ENCODE measurements at regions of chr3 and their contacts with region 1.

Region 1: DNA sequence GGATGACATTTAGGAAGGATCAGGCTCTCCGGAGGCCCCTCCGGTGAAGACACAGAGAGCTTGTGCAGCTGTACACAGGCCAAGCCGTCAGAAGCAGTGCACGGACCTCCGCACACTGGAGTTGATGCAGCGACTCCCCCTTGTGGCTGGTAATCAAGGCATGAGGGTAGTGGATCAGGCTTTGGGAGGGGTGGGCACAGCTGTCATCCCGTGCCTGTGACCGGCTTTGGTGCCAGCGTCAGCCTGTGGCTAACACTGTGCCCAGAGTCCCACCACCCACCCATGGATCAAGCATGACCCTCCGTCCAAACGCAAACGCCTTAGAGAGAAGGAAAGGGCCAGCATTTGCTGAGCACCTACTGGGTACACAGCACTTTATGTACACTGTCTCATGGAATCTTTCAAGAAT is 8.2 kb upstream of the GRIP2 start:
- DNase-seq: peak; percentile 71 to 89 (median 81)
- ATAC-seq: peak; percentile 77 to 86
- H3K4me3 ChIP-seq: no peak overlapping the region
- H3K27ac ChIP-seq: no peak overlapping the region
- H3K4me1 ChIP-seq: no peaks in the 10 kb centered on the region
- H3K27me3 ChIP-seq: no peaks in the 10 kb centered on the region

Region 2: DNA sequence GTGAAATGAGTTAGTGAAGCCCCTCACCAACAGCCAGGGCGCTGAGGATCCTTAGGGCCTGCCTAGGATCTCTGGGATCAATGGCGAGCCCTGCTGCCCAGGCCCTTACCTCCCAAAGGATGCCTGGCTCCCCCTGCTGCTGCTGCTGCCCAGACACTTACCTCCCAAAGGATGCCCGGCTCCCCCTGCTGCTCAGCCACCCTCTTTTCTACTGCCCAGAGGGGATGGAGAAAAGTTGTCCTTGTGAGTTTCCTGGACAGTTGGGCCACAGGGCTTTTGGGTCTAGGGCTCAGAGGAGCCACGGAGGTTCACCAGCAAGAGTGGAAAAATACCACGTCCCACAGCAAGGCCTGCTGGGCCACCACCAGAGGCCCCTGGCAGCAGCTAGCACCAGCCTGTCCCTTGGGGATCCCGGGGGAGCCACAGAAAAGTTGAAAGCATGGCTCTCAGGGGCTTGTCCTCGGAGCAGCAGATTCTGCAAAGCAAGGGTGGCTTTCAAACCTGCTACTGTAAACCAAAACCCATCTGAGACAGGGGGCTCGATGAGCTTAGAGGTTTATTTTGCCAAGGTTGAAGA is 86.5 kb before region 1 on chr3:
- intact Hi-C with region 1: no loop called
- DNase-seq: peak in 2 of 3 donors; percentile 76 to 82
- ATAC-seq: peak; percentile 27 to 31
- H3K4me3 ChIP-seq: no peak overlapping the region
- H3K27ac ChIP-seq: no peak overlapping the region
- H3K4me1 ChIP-seq: peaks cover 8% of the 10 kb centered on the region
- H3K27me3 ChIP-seq: no peaks in the 10 kb centered on the region

Region 3: DNA sequence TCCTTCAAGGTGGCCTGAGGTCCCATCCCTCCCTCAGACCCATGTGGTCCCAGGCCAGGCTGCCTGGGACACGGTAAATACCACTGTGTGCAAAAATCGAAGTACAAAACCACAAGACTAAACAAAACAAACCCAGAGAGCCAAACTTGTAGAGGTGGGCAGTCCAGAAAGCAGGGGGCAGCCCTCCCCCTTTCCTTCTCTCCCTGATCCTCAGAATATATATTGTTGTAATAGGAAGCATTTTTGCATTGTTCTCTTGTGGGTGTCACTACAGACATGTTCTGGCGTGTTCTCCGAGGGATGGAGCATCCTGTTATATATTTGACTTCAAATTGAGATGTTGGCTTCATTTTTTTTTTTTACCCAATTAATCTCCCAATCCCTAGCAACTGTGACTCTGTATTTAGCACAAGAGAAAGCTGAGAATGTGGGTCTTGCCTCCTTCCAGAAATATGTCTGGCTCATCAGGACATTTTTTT is 59.7 kb before region 1 on chr3:
- intact Hi-C with region 1: no loop called
- DNase-seq: no peak
- ATAC-seq: no peak
- H3K4me3 ChIP-seq: no peak overlapping the region
- H3K27ac ChIP-seq: peak overlapping the region; percentile 3
- H3K4me1 ChIP-seq: no peaks in the 10 kb centered on the region
- H3K27me3 ChIP-seq: no peaks in the 10 kb centered on the region

Region 4: DNA sequence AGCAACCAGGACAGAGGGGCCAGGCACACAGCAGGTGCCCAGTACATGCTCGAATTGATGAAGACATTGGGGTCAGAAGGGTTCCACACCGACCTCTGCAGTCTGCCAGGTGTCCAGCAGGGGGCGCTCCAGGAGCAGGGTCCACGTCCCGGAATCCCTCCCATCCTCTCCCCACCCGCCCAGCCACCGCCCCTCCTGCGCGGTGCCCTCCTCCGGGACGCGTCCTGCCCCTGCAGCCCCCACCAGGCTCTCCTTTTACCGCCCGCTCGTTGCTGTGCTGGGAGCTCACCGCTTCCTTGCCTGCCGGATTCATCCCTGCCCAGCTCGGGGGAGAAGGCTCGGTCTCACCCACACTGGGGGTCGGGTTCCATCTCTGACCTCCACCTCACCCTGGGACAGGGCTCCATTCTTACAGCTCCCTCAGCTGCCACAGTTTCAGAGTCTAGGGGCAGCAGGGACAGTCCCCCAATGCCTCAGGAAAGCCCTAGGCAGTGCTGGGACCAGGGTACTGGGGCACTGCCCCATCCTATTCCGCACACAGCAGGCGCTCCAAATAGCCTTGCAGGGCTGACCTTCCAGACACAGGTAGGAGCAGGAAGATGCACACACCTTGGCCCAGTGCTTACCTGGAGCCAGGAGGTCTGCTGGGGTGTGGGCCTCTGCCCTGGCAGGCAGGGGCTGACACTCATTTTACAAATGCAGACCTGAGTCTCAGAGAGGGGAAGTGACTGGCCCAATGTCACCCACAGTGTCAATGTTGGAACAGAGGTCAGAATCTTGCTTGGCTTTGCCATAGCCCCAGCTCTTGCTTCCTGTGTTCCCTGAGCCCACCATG is 39.1 kb before region 1 on chr3:
- intact Hi-C with region 1: loop called (anchors 2 to 5 kb)
- DNase-seq: peak; percentile 67 to 90 (median 89)
- ATAC-seq: peak; percentile 51 to 71
- H3K4me3 ChIP-seq: no peak overlapping the region
- H3K27ac ChIP-seq: no peak overlapping the region
- H3K4me1 ChIP-seq: no peaks in the 10 kb centered on the region
- H3K27me3 ChIP-seq: no peaks in the 10 kb centered on the region